IMR-90 (cell line): ENCODE measurements at regions of chr19 and their contacts with region 1.

Region 1: GRCh38 chr19:39846176-39846677 is at the start of gene FBL:
- DNase-seq: peak; percentile 85
- ATAC-seq: peak; percentile 89
- H3K4me3 ChIP-seq: peak within 1 kb of the TSS; percentile 85
- H3K27ac ChIP-seq: peak within 1 kb of the TSS; percentile 85
- H3K4me1 ChIP-seq: peaks cover 19% of the 10 kb centered on the region
- H3K27me3 ChIP-seq: no peaks in the 10 kb centered on the region
- CTCF ChIP-seq: no peak
- POLR2A ChIP-seq: peak; percentile 59
- RAD21 ChIP-seq: no peak
- total RNA-seq, gene FBL: 211 and 259 TPM in 2 replicates

Region 2: GRCh38 chr19:39445265-39446111 is 400.7 kb before region 1 on chr19 and contains the start of gene SUPT5H:
- CTCF ChIA-PET with region 1: interaction called, 3 read pairs
- POLR2A ChIA-PET with region 1: no interaction called
- dilution Hi-C with region 1: no loop called
- in situ Hi-C with region 1: loop called (anchors 25 kb)
- intact Hi-C with region 1: loop called (anchors 10 kb)
- DNase-seq: peak; percentile 97
- ATAC-seq: peak; percentile 96
- H3K4me3 ChIP-seq: peak within 1 kb of the TSS; percentile 83
- H3K27ac ChIP-seq: peak within 1 kb of the TSS; percentile 96
- H3K4me1 ChIP-seq: peaks cover 5% of the 10 kb centered on the region
- H3K27me3 ChIP-seq: no peaks in the 10 kb centered on the region
- CTCF ChIP-seq: no peak
- POLR2A ChIP-seq: peak; percentile 94
- RAD21 ChIP-seq: no peak
- total RNA-seq, gene SUPT5H: 75.3 and 86.9 TPM in 2 replicates

Region 3: GRCh38 chr19:39546599-39546998 is 299.6 kb before region 1 on chr19:
- CTCF ChIA-PET with region 1: no interaction called
- POLR2A ChIA-PET with region 1: no interaction called
- dilution Hi-C with region 1: no loop called
- in situ Hi-C with region 1: loop called (anchors 10 kb)
- intact Hi-C with region 1: loop called (anchors 2 kb)
- DNase-seq: no peak
- ATAC-seq: no peak
- H3K4me3 ChIP-seq: no peak overlapping the region
- H3K27ac ChIP-seq: no peak overlapping the region
- H3K4me1 ChIP-seq: no peaks in the 10 kb centered on the region
- H3K27me3 ChIP-seq: peaks cover 6% of the 10 kb centered on the region
- CTCF ChIP-seq: no peak
- POLR2A ChIP-seq: no peak
- RAD21 ChIP-seq: no peak

Region 4: GRCh38 chr19:39792999-39793546 is 53.2 kb before region 1 on chr19:
- CTCF ChIA-PET with region 1: interaction called, 12 read pairs
- POLR2A ChIA-PET with region 1: no interaction called
- dilution Hi-C with region 1: no loop called
- in situ Hi-C with region 1: loop called (anchors 5 kb)
- intact Hi-C with region 1: loop called (anchors 1 kb)
- DNase-seq: peak; percentile 69
- ATAC-seq: peak; percentile 99
- H3K4me3 ChIP-seq: peak overlapping the region; percentile 69
- H3K27ac ChIP-seq: no peak overlapping the region
- H3K4me1 ChIP-seq: no peaks in the 10 kb centered on the region
- H3K27me3 ChIP-seq: peaks cover 5% of the 10 kb centered on the region
- CTCF ChIP-seq: peak; percentile 91
- POLR2A ChIP-seq: no peak
- RAD21 ChIP-seq: peak; percentile 79

Region 5: GRCh38 chr19:40090241-40091204 is 244.3 kb after region 1 on chr19 and contains the start of gene ZNF780A:
- CTCF ChIA-PET with region 1: no interaction called
- POLR2A ChIA-PET with region 1: interaction called, 4 read pairs
- dilution Hi-C with region 1: no loop called
- in situ Hi-C with region 1: no loop called
- intact Hi-C with region 1: loop called (anchors 2 kb)
- DNase-seq: peak; percentile 47
- ATAC-seq: peak; percentile 97
- H3K4me3 ChIP-seq: peak within 1 kb of the TSS; percentile 91
- H3K27ac ChIP-seq: peak within 1 kb of the TSS; percentile 86
- H3K4me1 ChIP-seq: no peaks in the 10 kb centered on the region
- H3K27me3 ChIP-seq: no peaks in the 10 kb centered on the region
- CTCF ChIP-seq: no peak
- POLR2A ChIP-seq: 0 out of 2 replicates have a peak, but pooled peaks have one; percentile 43
- RAD21 ChIP-seq: no peak
- total RNA-seq, gene ZNF780A: 17.0 and 25.3 TPM in 2 replicates